Ascending aorta (tissue), 2 donors: ENCODE measurements at regions of chr3 and their contacts with region 1.

Region 1: GRCh38 chr3:137013955-137014688 is 56.3 kb downstream of the IL20RB start:
- DNase-seq: peak; percentile 48 to 95
- H3K4me3 ChIP-seq: peak overlapping the region; percentile 55 to 81
- H3K27ac ChIP-seq: peak overlapping the region; percentile 74 to 95
- H3K4me1 ChIP-seq: peaks cover 0 to 6% of the 10 kb centered on the region in 2 donors
- H3K27me3 ChIP-seq: no peaks in the 10 kb centered on the region
- CTCF ChIP-seq: peak; percentile 80 to 91 (median 81)

Region 2: GRCh38 chr3:136075218-136075808 is 938.8 kb before region 1 on chr3:
- intact Hi-C with region 1: loop called (anchors 2 kb)
- DNase-seq: peak; percentile 10 to 87
- H3K4me3 ChIP-seq: no peak overlapping the region
- H3K27ac ChIP-seq: no peak overlapping the region
- H3K4me1 ChIP-seq: peaks cover 6 to 15% of the 10 kb centered on the region in 2 donors
- H3K27me3 ChIP-seq: no peaks in the 10 kb centered on the region
- CTCF ChIP-seq: peak; percentile 87 to 91 (median 90)

Region 3: GRCh38 chr3:136250226-136250902 is 763.8 kb before region 1 on chr3 and contains the start of gene PCCB:
- intact Hi-C with region 1: loop called (anchors 2 kb)
- DNase-seq: peak; percentile 65 to 96
- H3K4me3 ChIP-seq: peak within 1 kb of the TSS; percentile 60 to 81
- H3K27ac ChIP-seq: peak within 1 kb of the TSS; percentile 80 to 90
- H3K4me1 ChIP-seq: peaks cover 0 to 3% of the 10 kb centered on the region in 2 donors
- H3K27me3 ChIP-seq: no peaks in the 10 kb centered on the region
- CTCF ChIP-seq: peak; percentile 81 to 92 (median 85)
- total RNA-seq, gene PCCB: 114 TPM

Region 4: GRCh38 chr3:136545664-136546268 is 468.4 kb before region 1 on chr3:
- intact Hi-C with region 1: loop called (anchors 10 kb)
- DNase-seq: no peak
- H3K4me3 ChIP-seq: no peak overlapping the region
- H3K27ac ChIP-seq: no peak overlapping the region
- H3K4me1 ChIP-seq: peaks cover 0 to 2% of the 10 kb centered on the region in 2 donors
- H3K27me3 ChIP-seq: no peaks in the 10 kb centered on the region
- CTCF ChIP-seq: peak in 1 of 3 experiments; percentile 43

Region 5: DNA sequence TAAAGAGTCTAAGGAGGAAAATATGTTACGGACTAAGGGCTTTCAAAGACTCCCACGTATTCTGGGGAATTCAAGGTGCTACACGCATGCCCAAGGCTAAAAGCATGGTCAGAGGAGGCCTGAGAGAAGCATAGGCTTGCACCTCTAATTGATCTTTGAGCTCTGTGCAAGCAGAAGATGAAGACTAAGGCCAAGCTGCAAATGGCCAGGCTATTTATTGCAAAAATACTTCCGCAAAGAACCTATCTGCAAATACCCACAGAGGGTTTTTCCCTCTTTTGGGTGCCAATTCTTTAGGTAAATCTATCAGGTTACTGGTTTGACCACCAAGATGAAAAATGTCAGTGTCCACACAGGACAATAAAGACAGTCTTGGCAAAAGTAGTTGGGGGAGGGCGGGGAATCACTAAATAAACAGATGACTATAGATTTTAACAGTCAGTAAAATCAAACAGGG is 381.5 kb before region 1 on chr3:
- intact Hi-C with region 1: no loop called
- DNase-seq: no peak
- H3K4me3 ChIP-seq: no peak overlapping the region
- H3K27ac ChIP-seq: no peak overlapping the region
- H3K4me1 ChIP-seq: peaks cover 0 to 6% of the 10 kb centered on the region in 2 donors
- H3K27me3 ChIP-seq: no peaks in the 10 kb centered on the region
- CTCF ChIP-seq: no peak

Region 6: DNA sequence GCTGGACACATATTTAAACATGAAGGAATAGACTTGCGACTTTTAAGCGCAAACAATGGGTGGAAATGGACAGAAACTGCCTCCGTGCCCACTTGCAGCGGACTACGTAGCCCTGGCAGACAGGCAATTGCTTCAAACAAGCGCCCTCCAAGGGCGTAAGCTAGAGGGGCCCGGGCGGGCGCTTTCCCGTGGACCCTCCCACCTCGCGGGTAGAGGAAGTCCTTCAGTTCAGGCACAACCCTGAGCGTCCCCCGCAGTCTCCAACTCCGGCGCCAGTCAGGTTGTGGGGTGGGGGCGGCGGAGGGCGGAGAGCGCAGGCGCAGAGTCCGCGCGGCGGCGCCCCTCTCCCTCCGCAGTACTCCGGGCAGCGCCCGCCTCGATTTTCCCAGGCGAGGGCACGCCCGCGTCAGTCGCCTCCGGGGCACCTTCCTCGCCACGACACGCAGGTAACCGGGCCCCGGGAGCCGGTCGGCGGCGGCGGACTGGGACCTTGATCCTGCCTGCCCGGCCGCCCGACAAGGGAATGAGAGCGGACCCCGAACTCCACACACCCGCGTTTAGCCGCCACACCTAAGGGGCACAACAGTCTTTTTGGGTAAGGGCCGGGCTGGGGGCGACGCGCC is 195.2 kb before region 1 on chr3 and contains the start of gene SLC35G2:
- intact Hi-C with region 1: loop called (anchors 2 kb)
- DNase-seq: peak; percentile 10 to 76
- H3K4me3 ChIP-seq: peak within 1 kb of the TSS; percentile 72 to 88
- H3K27ac ChIP-seq: peak within 1 kb of the TSS; percentile 63 to 84
- H3K4me1 ChIP-seq: peaks cover 2 to 6% of the 10 kb centered on the region in 2 donors
- H3K27me3 ChIP-seq: no peaks in the 10 kb centered on the region
- CTCF ChIP-seq: peak in 1 of 3 experiments; percentile 13
- total RNA-seq, gene SLC35G2: 10.0 TPM

Region 7: DNA sequence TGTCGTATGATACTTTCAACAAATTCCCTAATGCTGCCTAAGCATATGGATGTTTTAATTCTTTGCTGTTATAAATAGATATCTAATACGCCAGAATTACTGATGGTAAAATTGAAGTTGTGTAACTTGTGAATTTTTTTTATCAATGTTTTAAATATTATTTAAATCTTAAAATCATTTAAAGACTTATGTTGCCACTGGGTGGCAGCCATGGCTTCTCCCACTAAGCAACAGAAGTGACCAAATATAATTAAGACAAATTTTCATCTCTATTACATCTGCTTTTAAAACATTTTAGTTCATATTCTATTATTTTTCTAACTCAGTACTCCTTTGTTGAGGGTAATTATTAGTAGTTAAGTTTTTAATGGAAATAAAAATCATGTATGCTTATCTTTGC is 64.4 kb before region 1 on chr3:
- intact Hi-C with region 1: loop called (anchors 5 kb)
- DNase-seq: no peak
- H3K4me3 ChIP-seq: no peak overlapping the region
- H3K27ac ChIP-seq: no peak overlapping the region
- H3K4me1 ChIP-seq: no peaks in the 10 kb centered on the region
- H3K27me3 ChIP-seq: no peaks in the 10 kb centered on the region
- CTCF ChIP-seq: peak in 1 of 3 experiments; percentile 11

Region 8: DNA sequence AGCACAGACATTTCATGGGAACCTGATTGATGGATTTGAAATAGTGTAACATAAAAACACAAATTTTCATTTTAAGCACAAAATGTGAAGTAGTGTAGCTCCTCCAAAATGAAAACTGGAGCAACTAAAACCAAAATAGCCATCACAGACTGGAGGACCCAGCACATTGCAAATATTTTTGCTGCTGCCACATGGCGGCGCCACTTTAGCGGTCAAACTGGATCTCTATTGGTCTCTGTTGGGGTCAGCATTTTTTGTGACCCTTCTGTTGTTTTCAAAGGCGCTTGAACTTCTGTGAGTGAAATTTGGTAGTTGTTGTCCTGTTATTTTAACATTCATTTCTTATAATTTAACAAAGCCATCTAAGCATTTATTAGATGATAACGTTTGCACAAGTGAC is 203.6 kb after region 1 on chr3:
- intact Hi-C with region 1: no loop called
- DNase-seq: no peak
- H3K4me3 ChIP-seq: no peak overlapping the region
- H3K27ac ChIP-seq: no peak overlapping the region
- H3K4me1 ChIP-seq: no peaks in the 10 kb centered on the region
- H3K27me3 ChIP-seq: no peaks in the 10 kb centered on the region
- CTCF ChIP-seq: no peak